ENCODE measurements at regions of chr16 and their contacts with region 1.

Region 1: DNA sequence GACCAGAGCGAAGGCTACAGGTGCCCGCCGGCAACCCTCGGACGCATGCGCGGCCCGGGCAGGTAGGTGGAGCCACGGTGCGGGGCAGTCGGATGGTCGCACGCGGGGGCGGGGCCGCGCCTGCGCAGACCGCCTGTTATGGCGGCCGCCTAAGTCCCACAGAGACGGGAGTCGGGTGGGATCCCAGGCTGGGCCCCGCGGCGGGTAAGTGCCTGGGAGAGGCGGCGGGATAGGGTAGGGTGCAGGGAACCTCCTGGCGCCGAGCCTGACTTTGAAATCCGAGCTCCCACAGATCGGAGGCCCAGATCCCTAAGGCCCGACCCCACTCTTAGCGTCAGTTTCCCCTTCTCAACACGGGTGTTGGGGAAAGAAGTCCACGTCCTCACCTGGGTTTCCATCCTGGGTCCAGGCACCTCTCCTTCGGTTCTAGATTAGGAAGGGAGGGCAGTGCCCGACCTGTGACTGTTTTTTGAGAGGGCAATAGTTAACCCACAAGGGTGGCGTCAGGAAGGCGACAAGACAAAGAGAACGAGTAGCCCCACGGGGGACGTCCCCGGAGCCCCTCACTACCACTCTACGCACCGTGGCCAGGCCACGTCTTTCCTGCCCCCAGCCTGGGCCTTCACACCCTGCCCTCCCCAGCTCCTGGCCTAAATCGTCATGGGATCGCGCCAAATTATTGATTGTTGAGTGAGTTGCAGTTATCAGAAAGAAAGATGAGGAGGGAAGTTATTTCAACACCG is at the start of gene METTL22:
- DNase-seq: peak; percentile 50 to 91
- H3K4me3 ChIP-seq: peak within 1 kb of the TSS; percentile 89 to 98
- H3K27ac ChIP-seq: peak within 1 kb of the TSS; percentile 66 to 80
- H3K4me1 ChIP-seq: peaks cover 10 to 11% of the 10 kb centered on the region in 2 donors
- H3K27me3 ChIP-seq: no peaks in the 10 kb centered on the region
- CTCF ChIP-seq: no peak
- total RNA-seq, gene METTL22: 31.7 TPM

Region 2: DNA sequence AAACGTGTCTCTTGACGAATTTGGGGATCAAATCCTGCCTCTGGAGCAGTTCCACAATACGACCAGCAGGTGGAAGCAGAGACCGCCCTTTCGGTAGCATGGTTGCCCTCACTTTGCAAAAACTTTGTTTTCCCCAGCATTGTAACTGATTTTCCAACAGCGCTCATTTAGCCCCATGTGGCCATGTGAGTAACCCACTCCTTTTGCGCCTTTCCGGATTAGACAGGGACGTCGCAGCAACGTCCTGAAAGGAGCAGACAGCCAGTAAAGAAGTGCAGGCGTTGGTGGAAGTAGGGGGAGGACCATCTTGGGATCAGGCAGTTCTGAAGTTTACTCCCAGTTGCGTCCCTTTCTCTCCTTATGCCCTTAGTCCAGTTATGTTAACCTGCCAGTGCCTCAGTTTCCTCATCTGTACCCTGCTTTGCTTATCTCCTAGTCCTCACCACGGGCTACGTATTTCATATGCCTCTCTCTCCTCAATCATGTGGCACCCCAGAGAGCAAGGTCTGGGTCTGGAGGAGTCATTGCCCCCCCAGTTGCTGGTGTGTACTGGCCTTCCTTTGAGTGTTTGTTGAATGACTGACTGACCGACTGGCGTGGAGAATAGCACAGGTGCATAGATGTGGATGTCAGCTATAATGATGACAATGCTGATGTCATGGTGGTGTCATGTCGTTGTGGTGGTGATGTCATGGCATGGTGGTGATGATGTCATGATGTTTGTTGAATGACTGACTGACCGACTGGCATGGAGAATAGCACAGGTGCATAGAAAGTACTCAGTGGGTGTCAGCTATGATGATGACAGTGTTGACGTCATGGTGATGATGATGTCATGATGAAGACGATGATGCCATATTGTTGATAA is 53.8 kb before region 1 on chr16:
- intact Hi-C with region 1: loop called (anchors 1 kb)
- DNase-seq: peak; percentile 37 to 86
- H3K4me3 ChIP-seq: no peak overlapping the region
- H3K27ac ChIP-seq: no peak overlapping the region
- H3K4me1 ChIP-seq: peaks cover 0 to 11% of the 10 kb centered on the region in 2 donors
- H3K27me3 ChIP-seq: no peaks in the 10 kb centered on the region
- CTCF ChIP-seq: peak; percentile 94 to 99 (median 97)

Region 3: DNA sequence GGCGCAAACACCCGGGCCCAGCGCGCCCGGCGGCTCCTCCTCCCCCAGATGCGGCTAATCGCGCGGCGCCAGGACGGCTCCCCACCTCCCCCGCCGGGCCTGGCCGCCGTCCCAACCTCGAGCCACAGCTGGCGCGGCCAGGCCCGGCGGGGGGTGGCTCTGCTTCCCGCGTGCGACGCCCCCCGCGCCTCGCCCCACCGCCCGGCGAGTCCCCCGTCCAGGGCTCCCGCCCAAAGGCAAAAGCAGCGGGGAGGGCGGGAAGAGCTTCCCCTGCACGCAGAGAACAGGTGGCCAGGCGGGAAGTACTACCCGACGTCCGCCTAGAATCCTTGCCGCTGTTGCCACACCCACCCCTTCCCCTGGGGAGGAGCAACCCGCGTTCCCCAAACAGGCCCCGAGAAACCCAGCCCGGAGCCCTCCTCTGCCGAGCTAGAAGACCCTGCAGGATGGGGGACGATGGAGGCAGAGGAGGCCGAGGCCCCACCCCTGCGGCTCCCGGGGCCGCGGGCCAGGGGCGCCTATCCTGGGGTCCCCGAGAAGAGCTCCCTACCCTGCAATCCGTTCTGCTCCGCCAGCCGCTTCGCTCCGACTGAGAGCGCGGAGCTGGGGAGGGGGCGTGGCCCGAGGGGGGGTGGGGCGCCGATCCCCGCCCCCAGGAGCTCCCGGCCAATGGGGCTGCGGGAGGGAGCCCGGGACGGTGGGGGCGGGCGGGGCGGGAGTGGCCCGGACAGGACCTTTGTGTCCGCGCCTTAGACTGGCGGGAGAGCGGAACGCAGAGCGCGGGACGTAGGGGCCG is 246.9 kb after region 1 on chr16 and contains the start of gene CARHSP1:
- intact Hi-C with region 1: loop called (anchors 5 kb)
- DNase-seq: peak; percentile 61 to 91
- H3K4me3 ChIP-seq: peak within 1 kb of the TSS; percentile 80 to 92
- H3K27ac ChIP-seq: peak within 1 kb of the TSS; percentile 55 to 91
- H3K4me1 ChIP-seq: peaks cover 11 to 46% of the 10 kb centered on the region in 2 donors
- H3K27me3 ChIP-seq: no peaks in the 10 kb centered on the region
- CTCF ChIP-seq: no peak
- total RNA-seq, gene CARHSP1: 151 TPM

Measured in ascending aorta (tissue), 2 donors.